Dorsolateral prefrontal cortex (tissue), 120 donors: ENCODE measurements at regions of chr17 and their contacts with region 1.

Region 1: GRCh38 chr17:2054512-2055291 is at the start of gene HIC1:
- DNase-seq: peak in 7 of 10 donors; percentile 27 to 79 (median 47)
- H3K4me3 ChIP-seq: peak within 1 kb of the TSS; percentile 33 to 70 (median 58)
- H3K27ac ChIP-seq: peak within 1 kb of the TSS in 44 of 59 donors; percentile 4 to 85 (median 58)
- H3K27me3 ChIP-seq: peaks cover 0 to 30% (median 0%) of the 10 kb centered on the region in 45 donors
- CTCF ChIP-seq: peak; percentile 75 to 99 (median 94)
- total RNA-seq, gene HIC1: 1.6 to 17.4 (median 6.5) TPM

Region 2: GRCh38 chr17:2244545-2245525 is 190.1 kb after region 1 on chr17:
- intact Hi-C with region 1: loop called (anchors 1 to 2 kb)
- DNase-seq: peak; percentile 72 to 88 (median 85)
- H3K4me3 ChIP-seq: peak overlapping the region in 1 of 59 donors; percentile 9
- H3K27ac ChIP-seq: peak overlapping the region in 29 of 59 donors; percentile 4 to 66 (median 38)
- H3K27me3 ChIP-seq: no peaks in the 10 kb centered on the region
- CTCF ChIP-seq: peak; percentile 84 to 99 (median 98)

Region 3: DNA sequence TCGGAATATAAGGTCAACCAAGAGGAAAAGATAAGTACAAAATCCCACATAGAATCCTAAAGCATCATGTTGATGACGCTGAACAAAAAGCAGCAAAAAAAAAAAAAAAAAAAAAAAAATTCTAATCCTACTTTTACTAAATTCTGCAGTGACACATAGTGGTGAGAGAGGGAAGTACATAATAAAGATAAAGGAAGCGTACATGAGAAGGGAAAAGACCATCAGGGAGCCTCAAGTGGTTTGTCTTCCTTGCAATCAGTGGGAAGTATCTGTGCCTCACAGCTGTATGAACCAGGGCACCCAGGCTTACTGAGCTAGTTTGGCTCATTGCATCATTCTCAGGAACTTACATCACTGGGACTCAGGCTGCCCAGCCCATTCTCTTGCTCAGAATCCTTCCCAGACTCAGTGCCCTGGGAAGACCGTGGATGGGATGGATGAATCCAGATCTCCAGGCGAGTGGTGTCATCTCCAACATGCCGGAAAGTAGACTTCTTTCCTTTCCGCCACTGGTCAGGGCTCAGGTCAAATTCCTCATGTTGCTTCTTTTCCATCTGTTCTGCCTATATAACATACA is 227.7 kb after region 1 on chr17:
- intact Hi-C with region 1: loop called in 1 of 2 experiments (anchors 2 kb)
- DNase-seq: no peak
- H3K4me3 ChIP-seq: no peak overlapping the region
- H3K27ac ChIP-seq: peak overlapping the region in 1 of 59 donors; percentile 1
- H3K27me3 ChIP-seq: no peaks in the 10 kb centered on the region
- CTCF ChIP-seq: peak; percentile 51 to 82 (median 71)